ENCODE measurements at regions of chr15 and their contacts with region 1.

Region 1: GRCh38 chr15:29821416-29822131 is 694 bp downstream of the TJP1 start:
- DNase-seq: peak; percentile 62 to 73
- ATAC-seq: peak; percentile 69 to 70
- H3K4me3 ChIP-seq: peak overlapping the region; percentile 83 to 95 (median 89)
- H3K27ac ChIP-seq: peak overlapping the region; percentile 96 to 100 (median 98)
- H3K4me1 ChIP-seq: peaks cover 23 to 26% of the 10 kb centered on the region in 2 donors
- H3K27me3 ChIP-seq: no peaks in the 10 kb centered on the region
- CTCF ChIP-seq: peak in 1 of 5 experiments; percentile 37
- POLR2A ChIP-seq: peak; percentile 63 to 64

Region 2: DNA sequence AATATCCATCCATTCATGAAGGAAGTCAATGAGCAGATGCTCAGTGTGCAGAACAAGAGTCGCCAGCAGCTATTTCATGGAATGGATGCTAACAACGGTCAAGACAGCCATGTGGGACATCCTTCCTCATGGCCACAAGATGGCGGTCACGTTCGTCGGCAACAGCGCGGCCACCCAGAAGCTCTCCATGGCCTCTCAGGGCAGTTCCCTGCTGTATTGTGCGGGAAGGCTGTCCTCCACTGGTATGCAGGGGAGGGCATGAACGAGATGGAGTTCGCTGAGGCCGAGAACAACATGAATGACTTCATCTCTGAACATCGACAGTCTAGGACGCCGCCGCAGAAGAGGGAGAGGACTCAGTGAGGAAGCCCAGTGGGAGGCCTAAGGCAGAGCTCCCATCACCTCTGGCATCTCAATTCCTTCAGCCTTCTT is 207.6 kb before region 1 on chr15:
- in situ Hi-C with region 1: no loop called
- intact Hi-C with region 1: no loop called
- DNase-seq: no peak
- ATAC-seq: no peak
- H3K4me3 ChIP-seq: no peak overlapping the region
- H3K27ac ChIP-seq: no peak overlapping the region
- H3K4me1 ChIP-seq: no peaks in the 10 kb centered on the region
- H3K27me3 ChIP-seq: no peaks in the 10 kb centered on the region
- CTCF ChIP-seq: no peak
- POLR2A ChIP-seq: no peak

Region 3: DNA sequence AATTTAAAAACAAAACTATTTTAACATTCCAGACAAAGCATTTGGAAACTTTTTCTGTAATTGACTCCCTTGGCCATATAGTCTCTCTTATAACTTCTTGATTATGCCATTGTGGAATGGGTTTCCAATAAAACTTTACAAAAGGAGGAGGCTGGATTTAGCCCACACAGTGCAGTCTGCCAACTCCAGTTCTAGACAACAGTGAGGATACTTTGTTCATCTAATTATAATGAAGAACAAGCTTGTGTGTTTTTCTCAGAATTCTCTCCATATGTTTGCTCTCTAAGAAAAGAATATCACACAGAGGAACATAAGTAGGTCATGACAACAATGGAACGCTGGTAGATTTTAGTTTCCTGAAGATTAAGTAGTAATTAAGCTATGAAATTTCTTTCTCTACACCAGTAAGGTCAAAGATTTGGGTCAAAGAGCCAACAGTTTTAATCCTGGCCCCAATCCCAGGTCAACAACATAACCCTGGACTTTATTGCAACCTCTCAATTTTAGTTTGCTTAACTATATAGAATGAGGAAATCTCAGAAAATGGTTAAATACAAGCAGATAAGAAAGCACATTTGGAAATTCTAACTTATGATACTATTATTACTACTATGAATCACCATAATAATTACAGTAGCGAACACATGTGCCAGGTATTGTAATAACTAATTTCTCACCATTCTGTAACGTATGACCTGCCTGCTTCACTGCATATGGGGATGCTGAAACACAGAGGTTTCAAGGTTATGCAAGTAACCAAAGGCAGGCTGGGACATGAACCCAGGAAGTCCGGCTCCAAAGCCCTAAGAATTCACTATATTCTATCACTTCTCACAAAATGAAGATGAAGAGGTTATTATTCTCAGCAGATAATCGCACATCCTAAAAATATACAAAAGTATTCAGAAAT is 65.0 kb before region 1 on chr15:
- in situ Hi-C with region 1: no loop called
- intact Hi-C with region 1: loop called (anchors 5 kb)
- DNase-seq: no peak
- ATAC-seq: peak in 1 of 2 donors; percentile 46
- H3K4me3 ChIP-seq: no peak overlapping the region
- H3K27ac ChIP-seq: peak overlapping the region in 1 of 4 donors; percentile 39
- H3K4me1 ChIP-seq: peaks cover 14 to 20% of the 10 kb centered on the region in 2 donors
- H3K27me3 ChIP-seq: no peaks in the 10 kb centered on the region
- CTCF ChIP-seq: no peak
- POLR2A ChIP-seq: no peak

Region 4: DNA sequence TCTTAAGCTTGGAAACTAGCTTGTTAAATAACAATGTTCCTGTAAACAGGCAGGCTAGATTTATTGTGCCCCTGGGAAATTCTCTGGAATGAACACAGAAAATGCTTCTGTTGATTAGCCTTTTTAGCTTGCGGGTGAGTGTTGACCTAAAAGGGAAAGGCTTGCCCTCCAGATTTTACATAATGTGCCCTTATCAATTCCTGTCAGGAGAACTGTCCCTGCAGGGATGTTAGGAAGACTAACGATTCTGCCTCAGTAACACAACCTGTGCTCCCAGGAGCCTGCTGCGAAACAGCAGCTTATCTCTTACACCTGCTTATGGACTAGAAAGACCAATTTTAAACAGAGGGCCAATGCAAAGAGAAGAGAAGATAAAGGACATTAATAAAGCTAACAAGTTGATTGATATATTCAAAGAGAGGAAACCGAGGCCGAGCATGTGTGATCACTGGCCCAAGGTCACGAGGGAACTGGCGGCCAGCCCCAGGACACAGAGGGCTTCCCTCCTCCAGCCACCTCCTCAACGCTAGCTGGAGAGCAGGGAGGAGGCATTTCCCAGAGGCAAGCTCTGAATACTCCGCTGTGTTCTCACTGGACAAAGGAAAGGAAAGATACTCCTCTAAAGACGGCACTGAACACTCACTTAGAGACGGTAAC is 49.0 kb after region 1 on chr15:
- in situ Hi-C with region 1: no loop called
- intact Hi-C with region 1: loop called (anchors 10 kb)
- DNase-seq: no peak
- ATAC-seq: peak; percentile 30 to 59
- H3K4me3 ChIP-seq: peak overlapping the region in 2 of 4 donors; percentile 1 to 8
- H3K27ac ChIP-seq: peak overlapping the region; percentile 57 to 79 (median 78)
- H3K4me1 ChIP-seq: peaks cover 0 to 7% of the 10 kb centered on the region in 2 donors
- H3K27me3 ChIP-seq: no peaks in the 10 kb centered on the region
- CTCF ChIP-seq: no peak
- POLR2A ChIP-seq: no peak

Region 5: GRCh38 chr15:30038667-30039523 is 217.3 kb after region 1 on chr15:
- in situ Hi-C with region 1: no loop called
- intact Hi-C with region 1: no loop called
- DNase-seq: no peak
- ATAC-seq: no peak
- H3K4me3 ChIP-seq: no peak overlapping the region
- H3K27ac ChIP-seq: no peak overlapping the region
- H3K4me1 ChIP-seq: no peaks in the 10 kb centered on the region
- H3K27me3 ChIP-seq: no peaks in the 10 kb centered on the region
- CTCF ChIP-seq: no peak
- POLR2A ChIP-seq: no peak

Measured in gastrocnemius medialis (tissue), 4 donors.